Heart left ventricle (tissue), 16 donors: ENCODE measurements at regions of chr1 and their contacts with region 1.

Region 1: DNA sequence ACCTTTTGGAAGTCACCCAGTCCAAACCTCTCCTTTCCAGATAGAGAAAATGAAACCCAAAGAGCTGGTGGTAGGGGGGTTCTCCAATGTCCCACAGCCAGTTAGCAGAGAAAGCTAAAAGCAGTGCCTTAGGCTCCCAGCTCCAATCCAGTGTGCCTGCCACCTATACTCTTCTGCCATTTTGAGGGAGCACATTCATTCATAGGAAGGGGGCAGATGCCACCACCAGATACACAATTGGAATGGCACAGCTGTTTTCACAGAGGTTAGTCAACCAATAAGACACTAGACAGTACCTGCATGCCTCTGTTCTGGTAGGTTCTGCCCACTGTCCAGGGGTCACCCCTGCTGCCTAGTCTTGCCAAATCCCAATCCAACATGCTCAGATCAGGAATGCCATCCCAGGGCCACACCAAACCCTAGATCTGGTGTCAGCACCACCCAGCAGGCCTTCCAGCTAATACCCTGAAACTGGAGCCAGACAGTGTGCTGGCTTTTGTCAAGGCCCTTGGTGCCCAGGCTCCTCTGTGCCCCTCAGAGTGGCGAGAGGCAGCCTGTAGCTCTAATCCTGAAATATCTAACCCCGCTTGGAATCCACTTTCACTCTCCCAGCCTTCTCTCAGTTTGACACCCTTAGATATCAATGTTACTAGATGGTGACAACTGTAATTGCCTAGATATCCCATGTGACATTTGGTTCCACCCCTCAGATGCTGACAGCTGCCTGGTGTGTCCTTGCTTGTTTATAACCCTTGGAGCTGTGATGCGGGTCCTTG is 178.6 kb downstream of the TGFBR3 start:
- DNase-seq: peak; percentile 49 to 79 (median 65)
- ATAC-seq: peak; percentile 83 to 92 (median 88)
- H3K4me3 ChIP-seq: no peak overlapping the region
- H3K27ac ChIP-seq: peak overlapping the region; percentile 44 to 85 (median 64)
- H3K4me1 ChIP-seq: peaks cover 0 to 48% (median 14%) of the 10 kb centered on the region in 12 donors
- H3K27me3 ChIP-seq: no peaks in the 10 kb centered on the region
- CTCF ChIP-seq: no peak
- POLR2A ChIP-seq: no peak

Region 2: GRCh38 chr1:91582431-91582921 is 124.8 kb before region 1 on chr1:
- intact Hi-C with region 1: loop called in 1 of 10 experiments (anchors 5 kb)
- DNase-seq: no peak
- ATAC-seq: peak in 1 of 4 donors; percentile 47
- H3K4me3 ChIP-seq: no peak overlapping the region
- H3K27ac ChIP-seq: peak overlapping the region in 6 of 12 donors; percentile 1 to 80 (median 50)
- H3K4me1 ChIP-seq: peaks cover 0 to 49% (median 17%) of the 10 kb centered on the region in 12 donors
- H3K27me3 ChIP-seq: no peaks in the 10 kb centered on the region
- CTCF ChIP-seq: no peak
- POLR2A ChIP-seq: no peak

Region 3: GRCh38 chr1:91601554-91602376 is 105.5 kb before region 1 on chr1:
- intact Hi-C with region 1: loop called in 3 of 10 experiments (anchors 1 to 10 kb)
- DNase-seq: peak; percentile 55 to 93 (median 84)
- ATAC-seq: peak; percentile 93 to 97 (median 94)
- H3K4me3 ChIP-seq: no peak overlapping the region
- H3K27ac ChIP-seq: peak overlapping the region in 11 of 12 donors; percentile 28 to 80 (median 64)
- H3K4me1 ChIP-seq: peaks cover 0 to 31% (median 2%) of the 10 kb centered on the region in 12 donors
- H3K27me3 ChIP-seq: no peaks in the 10 kb centered on the region
- CTCF ChIP-seq: no peak
- POLR2A ChIP-seq: no peak

Region 4: DNA sequence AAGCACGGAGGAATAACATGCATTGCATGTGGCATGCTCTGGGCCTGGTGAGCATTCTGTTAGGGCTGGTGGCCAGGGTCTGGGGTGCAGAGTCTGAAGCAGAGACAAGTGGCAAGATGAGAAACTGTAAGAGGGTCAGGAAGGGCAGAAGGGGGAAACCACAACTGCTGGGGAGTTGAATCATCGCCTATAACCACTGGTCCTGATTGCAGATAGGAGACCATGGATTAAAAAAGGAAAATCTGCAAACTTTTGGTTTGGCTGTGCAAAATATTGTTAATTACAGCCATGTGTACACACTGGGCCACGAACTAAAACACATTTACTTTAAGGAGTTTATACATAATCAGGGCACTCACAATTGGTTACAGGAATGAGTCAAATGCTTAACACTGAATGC is 102.0 kb after region 1 on chr1:
- intact Hi-C with region 1: no loop called
- DNase-seq: no peak
- ATAC-seq: no peak
- H3K4me3 ChIP-seq: no peak overlapping the region
- H3K27ac ChIP-seq: no peak overlapping the region
- H3K4me1 ChIP-seq: peaks cover 0 to 64% (median 31%) of the 10 kb centered on the region in 12 donors
- H3K27me3 ChIP-seq: no peaks in the 10 kb centered on the region
- CTCF ChIP-seq: no peak
- POLR2A ChIP-seq: no peak